Activated CD4-positive, alpha-beta memory T cell treated with anti-CD3 and anti-CD28 coated beads for 36 hours (primary cell): ENCODE measurements at regions of chr9 and their contacts with region 1.

Region 1: DNA sequence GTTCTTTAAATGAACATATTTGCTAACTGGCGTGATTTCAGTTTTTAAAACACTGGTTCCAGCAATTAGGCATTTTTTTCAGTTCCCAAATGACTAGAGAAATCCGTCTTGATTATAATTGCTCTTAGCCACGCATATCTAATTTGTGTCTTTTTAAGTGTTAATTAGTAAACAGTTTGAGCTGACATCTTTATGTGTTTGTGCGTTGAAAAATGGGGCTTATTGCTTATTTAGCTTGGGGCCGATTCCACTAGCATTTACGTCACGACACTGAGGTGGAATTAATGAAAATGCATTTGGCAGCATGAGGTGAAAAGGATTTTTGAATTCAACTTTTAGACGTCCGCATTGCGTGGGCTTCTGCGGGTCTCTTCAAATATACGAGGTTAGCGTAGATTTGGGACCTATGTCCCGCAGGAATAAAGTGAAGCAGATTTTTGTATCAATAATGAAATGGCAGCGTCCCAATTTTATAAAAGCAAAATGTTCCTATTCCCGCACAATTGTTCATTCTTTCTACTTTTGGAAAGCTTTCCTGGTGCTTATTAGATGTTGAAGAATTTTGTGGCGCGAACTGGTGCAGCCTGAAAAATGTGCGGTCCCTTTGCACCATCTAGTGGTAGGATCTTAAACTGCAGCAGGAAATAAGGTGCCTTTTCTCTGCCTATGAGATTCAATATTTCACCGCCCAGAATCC is 122.7 kb upstream of the LMX1B start:
- DNase-seq: peak; percentile 61
- H3K4me3 Mint-ChIP-seq: no peak overlapping the region
- H3K27ac Mint-ChIP-seq: no peak overlapping the region
- H3K4me1 Mint-ChIP-seq: peaks cover 3% of the 10 kb centered on the region
- H3K27me3 Mint-ChIP-seq: peaks cover 9% of the 10 kb centered on the region

Region 2: DNA sequence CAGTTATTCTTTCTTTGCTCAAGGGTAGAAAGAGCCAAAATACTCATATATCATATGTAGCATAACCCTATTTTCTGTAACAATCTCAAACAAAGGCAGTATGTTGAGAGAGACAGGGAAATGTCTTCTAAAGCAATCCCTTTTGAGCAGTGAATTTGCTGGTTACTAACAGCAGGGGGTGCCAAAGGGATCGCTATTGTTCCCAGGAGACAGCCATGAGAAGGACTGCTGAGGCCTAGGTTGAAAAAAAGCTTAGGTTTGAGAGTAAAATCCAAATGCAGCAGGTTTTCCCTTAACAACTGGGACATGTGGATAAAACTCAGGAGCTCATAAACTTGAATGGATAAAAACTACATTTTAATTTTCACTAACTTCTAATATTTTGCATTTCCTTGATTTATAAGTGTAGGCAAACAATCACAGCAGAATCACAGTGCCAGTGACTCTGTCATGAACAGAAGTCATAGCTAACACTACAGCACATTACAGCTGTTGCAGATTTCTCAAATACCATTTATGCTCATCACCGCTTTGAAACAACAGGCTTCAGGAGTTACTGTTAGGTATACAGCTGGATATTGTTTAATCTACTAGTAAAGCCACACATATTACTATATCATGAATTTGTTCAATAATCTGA is 932.4 kb before region 1 on chr9:
- CTCF ChIA-PET with region 1: interaction called, 12 read pairs
- POLR2A ChIA-PET with region 1: no interaction called
- intact Hi-C with region 1: no loop called
- DNase-seq: peak; percentile 64
- H3K4me3 Mint-ChIP-seq: no peak overlapping the region
- H3K27ac Mint-ChIP-seq: no peak overlapping the region
- H3K4me1 Mint-ChIP-seq: peaks cover 13% of the 10 kb centered on the region
- H3K27me3 Mint-ChIP-seq: no peaks in the 10 kb centered on the region

Region 3: DNA sequence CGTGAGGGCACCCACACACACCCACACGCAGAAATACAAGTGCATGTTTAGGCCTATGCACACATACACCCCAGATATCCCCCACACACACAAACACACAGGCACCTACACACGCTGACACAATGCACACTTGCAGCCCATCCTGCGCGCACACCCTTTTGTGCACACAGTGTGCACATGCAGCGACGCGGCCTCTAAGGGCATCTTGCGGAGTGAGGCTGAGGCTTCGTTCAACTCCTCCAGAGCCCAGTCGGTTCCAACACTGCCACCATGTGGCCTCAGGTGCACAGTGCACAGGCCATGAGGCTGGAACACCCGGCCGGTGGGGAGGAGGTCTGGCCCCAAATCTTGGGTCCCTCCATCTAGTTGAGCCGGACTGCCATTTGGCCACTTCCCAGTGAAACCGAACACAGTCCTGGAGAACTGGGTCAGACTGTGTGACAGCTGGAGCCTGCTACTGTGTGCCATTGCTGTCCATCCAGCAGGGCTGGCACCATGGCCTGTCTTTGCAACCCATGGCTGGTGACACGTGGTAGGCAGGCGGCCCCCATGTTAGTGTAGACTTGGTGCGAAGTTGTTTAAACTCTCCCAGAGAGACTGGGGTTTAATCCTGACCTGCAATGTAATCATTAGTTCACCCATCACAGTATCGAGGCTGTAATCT is 262.1 kb before region 1 on chr9:
- CTCF ChIA-PET with region 1: interaction called, 7 read pairs
- POLR2A ChIA-PET with region 1: no interaction called
- intact Hi-C with region 1: loop called (anchors 2 kb)
- DNase-seq: peak; percentile 78
- H3K4me3 Mint-ChIP-seq: no peak overlapping the region
- H3K27ac Mint-ChIP-seq: no peak overlapping the region
- H3K4me1 Mint-ChIP-seq: peaks cover 4% of the 10 kb centered on the region
- H3K27me3 Mint-ChIP-seq: peaks cover 30% of the 10 kb centered on the region

Region 4: DNA sequence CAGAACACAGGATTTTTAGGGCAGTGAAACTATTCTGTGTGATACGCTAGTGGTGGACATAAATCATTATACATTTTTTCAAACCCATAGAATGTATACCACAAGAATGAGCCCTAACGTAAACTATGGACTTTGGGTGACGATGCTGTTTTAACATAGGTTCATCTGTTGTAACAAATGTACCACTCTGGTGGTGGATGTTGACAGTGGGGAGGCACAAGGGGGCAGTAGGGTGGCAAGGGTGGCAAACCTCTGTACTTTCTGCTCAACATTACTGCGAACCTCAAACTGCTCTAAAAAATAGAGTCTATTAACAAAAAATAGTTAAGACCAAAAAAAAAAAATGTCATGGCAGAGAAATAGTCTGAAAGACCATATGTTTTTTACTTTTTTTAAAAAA is 173.5 kb before region 1 on chr9:
- CTCF ChIA-PET with region 1: interaction called, 19 read pairs
- POLR2A ChIA-PET with region 1: no interaction called
- intact Hi-C with region 1: loop called (anchors 5 kb)
- DNase-seq: peak; percentile 38
- H3K4me3 Mint-ChIP-seq: no peak overlapping the region
- H3K27ac Mint-ChIP-seq: no peak overlapping the region
- H3K4me1 Mint-ChIP-seq: peaks cover 3% of the 10 kb centered on the region
- H3K27me3 Mint-ChIP-seq: no peaks in the 10 kb centered on the region

Region 5: GRCh38 chr9:126471084-126471624 is 19.9 kb before region 1 on chr9:
- CTCF ChIA-PET with region 1: interaction called, 34 read pairs
- POLR2A ChIA-PET with region 1: no interaction called
- intact Hi-C with region 1: no loop called
- DNase-seq: peak; percentile 92
- H3K4me3 Mint-ChIP-seq: peak overlapping the region; percentile 51
- H3K27ac Mint-ChIP-seq: peak overlapping the region; percentile 49
- H3K4me1 Mint-ChIP-seq: peaks cover 48% of the 10 kb centered on the region
- H3K27me3 Mint-ChIP-seq: peaks cover 7% of the 10 kb centered on the region

Region 6: GRCh38 chr9:126558051-126558665 is 67.1 kb after region 1 on chr9:
- CTCF ChIA-PET with region 1: interaction called, 401 read pairs
- POLR2A ChIA-PET with region 1: no interaction called
- intact Hi-C with region 1: no loop called
- DNase-seq: peak; percentile 78
- H3K4me3 Mint-ChIP-seq: no peak overlapping the region
- H3K27ac Mint-ChIP-seq: no peak overlapping the region
- H3K4me1 Mint-ChIP-seq: no peaks in the 10 kb centered on the region
- H3K27me3 Mint-ChIP-seq: peaks cover 32% of the 10 kb centered on the region